ENCODE measurements at regions of chr5 and their contacts with region 1.

Region 1: GRCh38 chr5:102627318-102627717 is 127.8 kb upstream of the PAM start:
- DNase-seq: no peak
- ATAC-seq: no peak
- H3K4me3 ChIP-seq: no peak overlapping the region
- H3K27ac ChIP-seq: peak overlapping the region in 5 of 12 donors; percentile 6 to 65 (median 52)
- H3K4me1 ChIP-seq: peaks cover 0 to 23% (median 8%) of the 10 kb centered on the region in 12 donors
- H3K27me3 ChIP-seq: no peaks in the 10 kb centered on the region
- CTCF ChIP-seq: no peak
- POLR2A ChIP-seq: no peak

Region 2: GRCh38 chr5:102498271-102499034 is 128.9 kb before region 1 on chr5 and contains the start of gene SLCO6A1:
- intact Hi-C with region 1: no loop called
- DNase-seq: no peak
- ATAC-seq: no peak
- H3K4me3 ChIP-seq: no peak within 1 kb of the TSS
- H3K27ac ChIP-seq: no peak within 1 kb of the TSS
- H3K4me1 ChIP-seq: no peaks in the 10 kb centered on the region
- H3K27me3 ChIP-seq: no peaks in the 10 kb centered on the region
- CTCF ChIP-seq: no peak
- POLR2A ChIP-seq: no peak
- total RNA-seq, gene SLCO6A1: not detected

Region 3: GRCh38 chr5:102531506-102531905 is 95.8 kb before region 1 on chr5:
- intact Hi-C with region 1: no loop called
- DNase-seq: no peak
- ATAC-seq: peak in 3 of 4 donors; percentile 39 to 76 (median 68)
- H3K4me3 ChIP-seq: no peak overlapping the region
- H3K27ac ChIP-seq: peak overlapping the region in 3 of 12 donors; percentile 32 to 53 (median 32)
- H3K4me1 ChIP-seq: peaks cover 0 to 43% (median 2%) of the 10 kb centered on the region in 12 donors
- H3K27me3 ChIP-seq: no peaks in the 10 kb centered on the region
- CTCF ChIP-seq: no peak
- POLR2A ChIP-seq: no peak

Region 4: GRCh38 chr5:102638912-102639652 is 11.8 kb after region 1 on chr5:
- intact Hi-C with region 1: loop called in 1 of 10 experiments (anchors 2 kb)
- DNase-seq: peak in 1 of 5 donors; percentile 25
- ATAC-seq: peak in 3 of 4 donors; percentile 81 to 91 (median 87)
- H3K4me3 ChIP-seq: no peak overlapping the region
- H3K27ac ChIP-seq: peak overlapping the region in 8 of 12 donors; percentile 21 to 73 (median 38)
- H3K4me1 ChIP-seq: peaks cover 0 to 5% (median 0%) of the 10 kb centered on the region in 12 donors
- H3K27me3 ChIP-seq: no peaks in the 10 kb centered on the region
- CTCF ChIP-seq: no peak
- POLR2A ChIP-seq: no peak

Region 5: GRCh38 chr5:102663749-102664530 is 36.6 kb after region 1 on chr5:
- intact Hi-C with region 1: loop called in 1 of 10 experiments (anchors 2 kb)
- DNase-seq: no peak
- ATAC-seq: peak; percentile 23 to 72 (median 34)
- H3K4me3 ChIP-seq: peak overlapping the region in 1 of 12 donors; percentile 14
- H3K27ac ChIP-seq: peak overlapping the region in 1 of 12 donors; percentile 15
- H3K4me1 ChIP-seq: peaks cover 0 to 19% (median 0%) of the 10 kb centered on the region in 12 donors
- H3K27me3 ChIP-seq: no peaks in the 10 kb centered on the region
- CTCF ChIP-seq: no peak
- POLR2A ChIP-seq: no peak

Measured in heart left ventricle (tissue), 16 donors.